GM12878 (cell line): ENCODE measurements at regions of chr3 and their contacts with region 1.

Region 1: DNA sequence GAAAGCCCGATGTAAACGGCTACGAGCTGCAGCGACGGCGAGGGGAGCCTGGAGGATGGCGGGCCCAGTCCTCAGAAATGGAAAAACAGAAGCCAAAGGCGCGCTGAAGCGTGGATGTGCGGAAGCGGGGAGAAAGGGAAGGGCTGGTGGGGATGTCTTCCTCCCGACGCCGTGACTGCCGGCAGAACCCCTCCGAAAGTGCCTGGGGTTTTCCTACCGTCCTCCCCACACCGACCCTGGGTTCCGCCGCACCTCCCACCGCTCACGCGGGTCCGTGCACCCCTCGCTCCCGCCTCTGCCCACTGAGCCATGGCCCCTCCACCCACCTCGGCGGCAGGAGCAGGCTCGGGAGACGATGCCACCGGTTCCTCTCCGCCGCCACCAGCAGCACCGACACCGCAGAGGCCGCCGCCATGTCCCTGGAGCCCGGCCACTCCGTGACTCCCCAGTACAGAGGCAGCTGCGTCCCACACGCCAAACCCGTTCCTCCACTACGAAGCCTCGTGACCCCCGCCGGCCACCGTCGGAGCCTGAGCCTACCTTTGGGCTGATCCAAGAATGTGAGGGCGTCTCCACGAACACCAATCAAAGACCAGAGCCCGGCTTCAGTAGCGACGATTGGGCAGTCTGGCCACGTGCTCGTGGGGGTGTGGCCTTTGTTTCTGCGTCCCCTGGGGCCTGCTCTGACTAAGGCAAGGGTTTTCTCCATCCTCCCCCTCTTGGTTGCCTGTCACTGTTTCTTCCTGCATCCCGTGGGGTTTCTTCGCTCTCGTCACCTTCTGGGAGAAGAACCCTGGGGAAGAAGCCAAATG is at the start of gene MCCC1:
- DNase-seq: peak; percentile 94
- ATAC-seq: peak; percentile 98
- H3K4me3 ChIP-seq: peak within 1 kb of the TSS; percentile 93
- H3K27ac ChIP-seq: peak within 1 kb of the TSS; percentile 92
- H3K4me1 ChIP-seq: peaks cover 4% of the 10 kb centered on the region
- H3K27me3 ChIP-seq: no peaks in the 10 kb centered on the region
- CTCF ChIP-seq: no peak; a peak in 1 of 6 replicates
- EP300 ChIP-seq: peak in 1 of 2 experiments; percentile 44; a peak in 1 of 4 replicates
- POLR2A ChIP-seq: peak; percentile 94
- RAD21 ChIP-seq: no peak
- polyA plus RNA-seq, gene MCCC1: 35.0 to 38.7 TPM

Region 2: DNA sequence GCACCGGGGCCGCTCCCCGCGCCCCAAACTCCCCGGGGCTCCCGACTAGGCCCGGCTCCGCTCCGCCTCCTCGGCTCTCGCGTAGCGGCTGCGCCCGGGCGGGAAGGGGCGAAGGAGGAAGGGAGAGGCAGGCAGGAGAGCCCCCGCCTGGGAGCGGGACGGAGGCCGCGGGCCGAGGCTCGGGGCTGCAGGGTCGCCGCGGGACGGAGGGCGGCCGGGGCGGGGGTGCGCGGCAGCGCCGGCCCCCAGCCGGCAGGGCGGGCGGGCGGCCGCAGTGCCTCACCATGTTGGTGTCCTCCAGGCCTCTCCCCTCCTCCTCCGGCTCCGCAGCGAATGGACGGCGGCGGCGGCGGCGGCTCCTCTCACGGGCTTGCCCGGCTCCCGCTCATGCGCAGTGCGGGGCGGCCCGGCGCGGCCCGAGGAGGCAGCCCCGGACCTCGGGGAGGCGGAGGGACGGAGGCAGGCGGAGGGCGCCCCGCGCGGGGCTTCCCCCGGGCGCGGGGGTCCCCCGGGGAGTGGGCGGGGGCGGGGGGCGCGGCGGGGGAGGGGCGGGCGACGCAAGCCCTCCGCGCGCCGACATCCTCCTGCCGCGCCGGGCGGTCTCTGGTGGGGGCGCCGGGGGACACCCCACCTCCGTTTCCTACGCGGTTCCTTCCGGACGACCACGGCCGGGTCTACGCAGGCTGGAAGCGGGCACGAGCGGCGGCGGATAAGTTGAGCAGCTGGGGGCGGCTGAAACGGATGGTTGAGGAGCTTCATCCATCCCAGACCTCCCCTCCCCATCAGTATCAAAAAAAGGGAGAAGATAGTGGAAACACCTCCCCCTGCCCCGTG is 118.8 kb before region 1 on chr3 and contains the start of gene DCUN1D1:
- CTCF ChIA-PET with region 1: no interaction called
- POLR2A ChIA-PET with region 1: interaction called, 3 read pairs
- RAD21 ChIA-PET with region 1: no interaction called
- SMC1A ChIA-PET with region 1: no interaction called
- in situ Hi-C with region 1: no loop called
- intact Hi-C with region 1: loop called (anchors 5 kb)
- DNase-seq: peak; percentile 19
- ATAC-seq: peak; percentile 91
- H3K4me3 ChIP-seq: peak within 1 kb of the TSS; percentile 85
- H3K27ac ChIP-seq: peak within 1 kb of the TSS; percentile 53
- H3K4me1 ChIP-seq: peaks cover 9% of the 10 kb centered on the region
- H3K27me3 ChIP-seq: no peaks in the 10 kb centered on the region
- CTCF ChIP-seq: no peak
- EP300 ChIP-seq: no peak
- POLR2A ChIP-seq: peak; percentile 84
- RAD21 ChIP-seq: no peak
- polyA plus RNA-seq, gene DCUN1D1: 19.8 to 47.4 TPM

Region 3: DNA sequence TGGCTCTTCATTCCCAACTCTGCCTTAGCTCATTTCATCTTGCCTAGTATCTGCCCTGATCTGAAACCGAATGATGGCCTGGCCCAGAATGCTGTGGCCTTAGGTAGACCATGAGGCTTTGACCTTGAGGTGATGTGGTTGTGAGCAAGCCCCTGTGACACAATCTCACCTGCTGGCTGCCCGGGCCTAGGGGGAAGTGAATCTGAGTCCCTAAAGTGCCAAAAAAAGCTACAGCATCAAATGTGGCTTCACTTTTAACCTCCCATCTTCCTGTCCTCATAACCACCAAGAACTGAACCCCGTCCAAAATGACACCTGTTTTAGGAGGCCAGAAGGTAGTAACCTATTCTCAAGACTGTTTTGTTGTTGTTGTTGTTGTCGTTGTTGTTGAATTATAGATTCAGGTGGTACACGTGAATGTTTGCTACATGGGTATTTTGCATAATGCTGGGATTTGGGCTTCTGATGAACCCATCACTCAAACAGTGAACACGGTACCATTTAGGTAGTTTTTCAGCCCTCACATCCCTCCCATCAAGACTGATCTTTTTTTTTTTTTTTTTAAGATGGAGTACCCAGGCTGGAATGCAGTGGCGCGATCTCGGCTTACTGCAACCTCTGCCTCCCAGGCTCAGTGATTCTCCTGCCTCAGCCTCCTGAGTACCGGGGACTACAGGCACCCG is 54.5 kb before region 1 on chr3:
- CTCF ChIA-PET with region 1: no interaction called
- POLR2A ChIA-PET with region 1: interaction called, 4 read pairs
- RAD21 ChIA-PET with region 1: no interaction called
- SMC1A ChIA-PET with region 1: interaction called, 3 read pairs
- in situ Hi-C with region 1: no loop called
- intact Hi-C with region 1: loop called (anchors 2 kb)
- DNase-seq: peak; percentile 90
- ATAC-seq: peak; percentile 95
- H3K4me3 ChIP-seq: no peak overlapping the region
- H3K27ac ChIP-seq: peak overlapping the region; percentile 2; the same call in 1 of the 2 replicates
- H3K4me1 ChIP-seq: peaks cover 44% of the 10 kb centered on the region
- H3K27me3 ChIP-seq: no peaks in the 10 kb centered on the region
- CTCF ChIP-seq: no peak
- EP300 ChIP-seq: peak; percentile 83 to 85
- POLR2A ChIP-seq: no peak
- RAD21 ChIP-seq: 0 out of 2 replicates have a peak, but pooled peaks have one; percentile 11

Region 4: DNA sequence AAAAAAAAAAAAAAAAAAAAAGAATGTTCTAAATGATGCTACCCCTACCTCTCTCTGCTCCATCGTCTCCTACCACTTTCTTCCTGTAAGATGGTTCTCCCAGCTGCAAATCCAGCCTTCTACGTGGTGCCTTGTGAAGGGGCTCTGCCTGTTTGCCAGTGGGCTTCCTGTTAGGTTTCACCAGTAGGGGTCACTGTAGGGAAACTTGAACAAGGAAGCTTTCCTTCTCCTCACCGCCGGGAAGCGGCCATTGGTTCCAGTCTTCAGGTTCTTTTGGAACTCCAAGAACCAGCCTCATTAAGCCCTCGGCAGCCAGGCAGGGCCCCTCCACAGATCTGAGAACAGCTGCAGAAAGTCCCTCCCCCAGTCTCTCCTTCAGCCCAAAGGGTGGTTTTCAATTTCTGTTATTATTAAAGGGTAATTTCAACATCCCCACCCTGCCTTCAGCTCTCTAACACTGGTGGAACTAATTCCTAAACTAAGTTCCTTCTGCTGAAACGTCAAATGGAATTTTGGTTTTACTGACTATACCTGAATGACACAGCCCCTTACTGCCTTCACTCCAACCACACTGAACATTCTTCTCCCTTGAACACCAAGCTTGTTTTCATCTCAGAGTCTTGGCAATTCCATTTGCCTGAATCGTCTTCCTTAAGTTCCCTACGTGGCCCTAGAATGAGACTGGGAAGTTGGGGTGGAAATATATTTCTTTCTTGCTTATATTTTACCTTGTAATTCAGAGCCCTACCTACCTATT is 13.4 kb before region 1 on chr3:
- CTCF ChIA-PET with region 1: interaction called, 79 read pairs
- POLR2A ChIA-PET with region 1: interaction called, 3 read pairs
- RAD21 ChIA-PET with region 1: interaction called, 7 read pairs
- SMC1A ChIA-PET with region 1: interaction called, 9 read pairs
- in situ Hi-C with region 1: no loop called
- intact Hi-C with region 1: no loop called
- DNase-seq: no peak
- ATAC-seq: peak; percentile 54
- H3K4me3 ChIP-seq: no peak overlapping the region
- H3K27ac ChIP-seq: no peak overlapping the region
- H3K4me1 ChIP-seq: no peaks in the 10 kb centered on the region
- H3K27me3 ChIP-seq: no peaks in the 10 kb centered on the region
- CTCF ChIP-seq: peak; percentile 26 to 50 (median 36); a peak in 5 of 6 replicates
- EP300 ChIP-seq: no peak
- POLR2A ChIP-seq: no peak
- RAD21 ChIP-seq: peak; percentile 23; the same call in 1 of the 2 replicates